Naive thymus-derived CD4-positive, alpha-beta T cell (primary cell): ENCODE measurements at regions of chr2 and their contacts with region 1.

Region 1: GRCh38 chr2:96913398-96914202 is 43.7 kb upstream of the SEMA4C start:
- DNase-seq: peak in 8 of 9 donors; percentile 55 to 78 (median 72)
- ATAC-seq: peak; percentile 85
- H3K4me3 ChIP-seq: peak overlapping the region; percentile 68
- H3K4me3 Mint-ChIP-seq: peak overlapping the region; percentile 79 to 94 (median 88)
- H3K27ac ChIP-seq: peak overlapping the region; percentile 61
- H3K27ac Mint-ChIP-seq: peak overlapping the region; percentile 90 to 100 (median 97)
- H3K4me1 ChIP-seq: peaks cover 33 to 38% of the 10 kb centered on the region in 2 donors
- H3K4me1 Mint-ChIP-seq: peaks cover 45 to 96% (median 89%) of the 10 kb centered on the region in 7 donors
- H3K27me3 ChIP-seq: no peaks in the 10 kb centered on the region
- H3K27me3 Mint-ChIP-seq: peaks cover 0 to 7% (median 0%) of the 10 kb centered on the region in 5 donors

Region 2: GRCh38 chr2:96730212-96730611 is 183.4 kb before region 1 on chr2:
- CTCF ChIA-PET with region 1: no interaction called
- POLR2A ChIA-PET with region 1: no interaction called
- intact Hi-C with region 1: no loop called
- DNase-seq: no peak
- ATAC-seq: no peak
- H3K4me3 ChIP-seq: no peak overlapping the region
- H3K4me3 Mint-ChIP-seq: no peak overlapping the region
- H3K27ac ChIP-seq: no peak overlapping the region
- H3K27ac Mint-ChIP-seq: no peak overlapping the region
- H3K4me1 ChIP-seq: no peaks in the 10 kb centered on the region
- H3K4me1 Mint-ChIP-seq: peaks cover 0 to 11% (median 4%) of the 10 kb centered on the region in 7 donors
- H3K27me3 ChIP-seq: no peaks in the 10 kb centered on the region
- H3K27me3 Mint-ChIP-seq: no peaks in the 10 kb centered on the region

Region 3: DNA sequence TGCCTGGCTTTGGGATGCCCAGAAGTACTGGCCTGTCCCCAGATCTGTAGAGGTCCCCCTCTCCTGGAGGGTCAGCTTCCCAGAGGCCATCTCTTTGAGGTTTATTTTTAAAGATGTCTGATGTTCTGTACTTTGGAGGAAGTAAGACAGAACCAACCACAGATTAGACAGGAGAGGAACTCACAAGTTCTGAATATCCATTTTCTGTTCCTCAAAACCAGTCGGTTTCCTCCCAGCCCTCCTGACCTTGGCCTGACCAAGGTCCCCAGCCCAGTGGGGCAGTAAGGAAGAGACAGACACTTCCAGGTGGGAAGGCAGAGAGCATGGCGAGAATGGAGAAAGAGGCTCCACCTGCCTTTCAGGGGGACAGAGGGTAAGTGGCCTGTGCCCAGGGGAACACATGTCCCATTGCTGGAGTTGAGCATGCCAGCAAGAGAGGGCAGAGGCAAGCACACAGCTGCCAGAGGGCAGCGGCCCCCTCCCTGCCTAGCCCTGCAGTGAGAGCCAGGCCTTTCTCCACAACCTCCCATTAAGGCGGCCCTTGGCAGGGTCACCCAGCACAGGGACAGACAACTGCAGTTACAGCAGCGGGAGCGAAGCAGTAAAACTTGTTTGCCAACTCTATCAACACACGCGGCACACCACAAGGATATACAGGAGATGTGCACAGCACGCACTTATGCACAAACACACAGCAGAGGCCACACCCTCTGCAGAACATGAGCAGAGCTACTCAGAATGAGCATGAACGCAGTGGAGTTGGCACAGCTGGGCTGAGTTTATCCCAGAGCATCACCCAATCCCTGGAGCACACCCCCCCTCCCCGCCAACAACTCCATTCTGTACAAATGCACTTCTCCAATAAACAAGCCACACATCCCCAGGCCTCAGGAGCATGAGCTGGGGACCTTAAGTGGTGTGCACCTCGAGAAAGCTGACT is 25.3 kb before region 1 on chr2:
- CTCF ChIA-PET with region 1: interaction called, 3 read pairs
- POLR2A ChIA-PET with region 1: interaction called, 38 read pairs
- intact Hi-C with region 1: no loop called
- DNase-seq: no peak
- ATAC-seq: peak; percentile 63
- H3K4me3 ChIP-seq: no peak overlapping the region
- H3K4me3 Mint-ChIP-seq: peak overlapping the region in 8 of 10 donors; percentile 0 to 60 (median 53)
- H3K27ac ChIP-seq: no peak overlapping the region
- H3K27ac Mint-ChIP-seq: peak overlapping the region; percentile 49 to 95 (median 86)
- H3K4me1 ChIP-seq: peaks cover 14 to 39% of the 10 kb centered on the region in 2 donors
- H3K4me1 Mint-ChIP-seq: peaks cover 37 to 64% (median 53%) of the 10 kb centered on the region in 7 donors
- H3K27me3 ChIP-seq: no peaks in the 10 kb centered on the region
- H3K27me3 Mint-ChIP-seq: no peaks in the 10 kb centered on the region

Region 4: DNA sequence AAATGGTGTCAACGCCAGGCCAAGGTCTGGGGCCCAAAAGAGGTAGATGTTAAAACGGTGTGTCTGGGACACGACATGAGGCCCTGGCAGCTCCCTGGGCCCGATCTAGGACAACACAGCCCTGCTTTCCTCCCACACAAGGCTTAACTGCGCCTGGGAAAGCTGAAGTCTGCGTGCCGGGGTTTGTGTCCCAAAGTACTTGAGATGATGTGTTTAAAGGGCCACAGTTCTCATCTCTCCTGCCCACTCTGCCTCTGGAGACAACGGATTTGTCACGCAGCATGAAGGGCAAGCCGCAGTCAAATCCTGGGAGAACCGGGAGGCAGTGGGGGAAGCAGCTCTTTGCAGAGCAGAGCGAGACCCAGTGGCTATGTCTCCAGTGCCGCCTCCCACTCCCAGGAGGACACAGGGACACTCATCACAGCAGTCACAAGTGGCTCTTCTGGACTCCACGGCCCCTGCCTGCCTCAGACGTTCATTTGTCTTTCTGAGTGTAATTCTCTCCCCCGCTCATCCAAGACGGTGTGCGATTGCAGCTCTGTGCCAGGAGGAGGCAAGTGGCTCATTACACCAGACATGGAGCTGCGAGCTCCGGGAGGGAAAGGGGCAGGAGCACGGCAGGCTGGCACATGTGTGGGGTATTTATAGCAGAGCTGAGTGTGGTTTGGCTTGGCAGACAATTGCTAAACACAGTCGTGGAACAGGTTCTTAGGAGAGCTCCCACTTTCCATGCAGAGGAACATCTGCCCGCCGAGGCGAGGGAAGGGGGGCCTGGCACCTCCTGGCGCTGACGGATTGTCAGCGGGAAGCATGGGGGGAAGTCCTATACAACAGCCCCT is 14.0 kb after region 1 on chr2:
- CTCF ChIA-PET with region 1: interaction called, 4 read pairs
- POLR2A ChIA-PET with region 1: interaction called, 68 read pairs
- intact Hi-C with region 1: loop called (anchors 1 kb)
- DNase-seq: no peak
- ATAC-seq: no peak
- H3K4me3 ChIP-seq: no peak overlapping the region
- H3K4me3 Mint-ChIP-seq: no peak overlapping the region
- H3K27ac ChIP-seq: no peak overlapping the region
- H3K27ac Mint-ChIP-seq: no peak overlapping the region
- H3K4me1 ChIP-seq: peaks cover 19 to 23% of the 10 kb centered on the region in 2 donors
- H3K4me1 Mint-ChIP-seq: peaks cover 16 to 44% (median 29%) of the 10 kb centered on the region in 7 donors
- H3K27me3 ChIP-seq: no peaks in the 10 kb centered on the region
- H3K27me3 Mint-ChIP-seq: peaks cover 0 to 26% (median 0%) of the 10 kb centered on the region in 5 donors

Region 5: DNA sequence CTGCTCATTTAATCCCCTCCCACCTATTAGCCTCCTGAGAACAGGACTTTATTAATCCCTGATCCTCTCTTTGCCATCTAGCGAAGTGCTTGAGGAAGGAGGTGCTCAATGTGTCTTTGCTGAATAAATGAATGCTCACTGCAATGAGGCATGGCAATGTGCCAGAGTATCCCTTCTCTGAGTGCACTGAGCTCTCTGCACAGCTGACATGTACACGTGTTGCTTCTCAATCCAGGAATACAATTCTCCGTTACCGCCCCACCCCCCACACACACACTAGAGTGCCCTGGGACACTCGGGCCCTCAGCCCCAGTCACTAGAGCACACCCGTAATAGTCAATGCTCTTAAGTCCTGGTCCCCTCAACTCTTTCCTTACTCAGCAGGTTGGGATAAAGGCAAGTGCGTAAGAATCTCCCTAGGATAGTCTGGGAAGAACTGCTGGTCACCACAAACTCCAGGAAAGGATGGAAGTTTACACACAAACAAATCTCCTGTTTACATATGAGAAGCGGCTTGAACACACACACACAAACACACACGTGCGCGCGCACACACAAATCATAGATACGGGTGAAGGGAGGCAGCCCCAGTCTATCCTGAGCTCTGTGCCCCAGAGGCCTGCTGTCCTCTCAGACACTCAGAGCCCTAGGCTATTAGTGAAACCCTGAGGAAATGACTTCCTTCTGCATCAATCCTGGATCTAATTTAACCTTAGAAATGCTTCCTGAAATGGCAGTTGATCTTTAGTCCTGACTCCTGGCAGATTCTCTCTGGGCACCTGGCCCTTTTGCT is 31.6 kb after region 1 on chr2:
- CTCF ChIA-PET with region 1: interaction called, 8 read pairs
- POLR2A ChIA-PET with region 1: interaction called, 54 read pairs
- intact Hi-C with region 1: loop called (anchors 1 to 5 kb)
- DNase-seq: no peak
- ATAC-seq: no peak
- H3K4me3 ChIP-seq: no peak overlapping the region
- H3K4me3 Mint-ChIP-seq: peak overlapping the region in 2 of 10 donors; percentile 24 to 30
- H3K27ac ChIP-seq: no peak overlapping the region
- H3K27ac Mint-ChIP-seq: peak overlapping the region in 7 of 9 donors; percentile 1 to 71 (median 38)
- H3K4me1 ChIP-seq: peaks cover 14 to 22% of the 10 kb centered on the region in 2 donors
- H3K4me1 Mint-ChIP-seq: peaks cover 20 to 54% (median 39%) of the 10 kb centered on the region in 7 donors
- H3K27me3 ChIP-seq: no peaks in the 10 kb centered on the region
- H3K27me3 Mint-ChIP-seq: peaks cover 0 to 10% (median 0%) of the 10 kb centered on the region in 5 donors